Panc1 (cell line): ENCODE measurements at regions of chr12 and their contacts with region 1.

Region 1: DNA sequence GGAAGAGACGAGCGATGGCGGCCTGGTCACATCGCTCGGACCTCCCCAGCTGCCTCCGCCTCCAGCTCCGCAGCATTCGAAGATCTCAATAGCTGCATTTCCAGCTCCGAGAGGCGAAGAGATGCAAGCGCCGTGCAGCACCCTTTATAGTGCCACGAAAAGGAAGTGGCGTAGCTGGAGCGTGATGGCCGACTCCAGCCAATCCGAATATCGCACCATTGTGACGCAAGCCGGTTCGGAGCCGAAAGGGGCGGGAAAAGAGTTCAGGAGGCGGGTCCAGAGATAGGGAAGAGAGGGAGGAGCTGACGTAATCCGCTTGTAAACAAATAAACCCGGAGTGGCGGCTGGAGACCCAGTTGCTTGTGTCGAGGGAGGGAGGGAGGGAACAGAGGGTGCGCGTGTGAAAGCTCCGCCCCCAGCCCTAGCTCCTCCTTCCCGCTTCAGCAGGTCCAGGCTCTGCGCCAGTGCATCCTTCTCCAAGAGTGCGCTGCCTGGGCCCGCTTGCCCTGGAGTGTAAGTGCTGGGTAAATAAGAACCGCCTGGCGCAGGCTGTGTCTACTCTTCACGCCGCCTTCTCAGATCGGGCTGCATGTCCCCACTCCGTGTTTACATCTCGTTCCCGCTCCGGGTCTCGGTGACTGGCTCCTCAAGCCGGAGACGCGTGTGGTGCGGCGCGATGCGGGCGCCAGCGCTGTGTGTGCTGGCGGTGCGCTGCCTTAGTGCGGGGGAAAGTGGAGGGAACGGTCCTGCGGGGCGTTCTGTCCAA is at the start of gene BTG1:
- DNase-seq: peak; percentile 98
- ATAC-seq: peak; percentile 90
- H3K4me3 ChIP-seq: peak within 1 kb of the TSS; percentile 78 to 86
- H3K27ac ChIP-seq: peak within 1 kb of the TSS; percentile 85
- H3K4me1 ChIP-seq: peaks cover 27% of the 10 kb centered on the region
- H3K27me3 ChIP-seq: no peaks in the 10 kb centered on the region
- CTCF ChIP-seq: no peak
- total RNA-seq, gene BTG1: 50.0 TPM

Region 2: GRCh38 chr12:92002673-92003382 is 143.1 kb before region 1 on chr12:
- CTCF ChIA-PET with region 1: no interaction called
- POLR2A ChIA-PET with region 1: no interaction called
- in situ Hi-C with region 1: no loop called
- intact Hi-C with region 1: loop called (anchors 10 kb)
- DNase-seq: no peak
- ATAC-seq: no peak
- H3K4me3 ChIP-seq: no peak overlapping the region
- H3K27ac ChIP-seq: no peak overlapping the region
- H3K4me1 ChIP-seq: no peaks in the 10 kb centered on the region
- H3K27me3 ChIP-seq: no peaks in the 10 kb centered on the region
- CTCF ChIP-seq: no peak

Region 3: GRCh38 chr12:92570056-92570753 is 424.3 kb after region 1 on chr12:
- CTCF ChIA-PET with region 1: interaction called, 3 read pairs
- POLR2A ChIA-PET with region 1: no interaction called
- in situ Hi-C with region 1: no loop called
- intact Hi-C with region 1: loop called (anchors 5 kb)
- DNase-seq: peak; percentile 41
- ATAC-seq: peak; percentile 80
- H3K4me3 ChIP-seq: no peak overlapping the region
- H3K27ac ChIP-seq: no peak overlapping the region
- H3K4me1 ChIP-seq: no peaks in the 10 kb centered on the region
- H3K27me3 ChIP-seq: 0 out of 2 replicates have a peak, but pooled peaks cover 2% of the 10 kb centered on the region
- CTCF ChIP-seq: peak; percentile 70

Region 4: GRCh38 chr12:92649511-92650227 is 503.8 kb after region 1 on chr12:
- CTCF ChIA-PET with region 1: no interaction called
- POLR2A ChIA-PET with region 1: no interaction called
- in situ Hi-C with region 1: no loop called
- intact Hi-C with region 1: loop called (anchors 5 kb)
- DNase-seq: peak; percentile 61
- ATAC-seq: peak; percentile 95
- H3K4me3 ChIP-seq: no peak overlapping the region
- H3K27ac ChIP-seq: no peak overlapping the region
- H3K4me1 ChIP-seq: no peaks in the 10 kb centered on the region
- H3K27me3 ChIP-seq: peaks cover 4% of the 10 kb centered on the region; the same call in 1 of the 2 replicates
- CTCF ChIP-seq: peak; percentile 80